OCI-LY7 (cell line): ENCODE measurements at regions of chr3 and their contacts with region 1.

Region 1: DNA sequence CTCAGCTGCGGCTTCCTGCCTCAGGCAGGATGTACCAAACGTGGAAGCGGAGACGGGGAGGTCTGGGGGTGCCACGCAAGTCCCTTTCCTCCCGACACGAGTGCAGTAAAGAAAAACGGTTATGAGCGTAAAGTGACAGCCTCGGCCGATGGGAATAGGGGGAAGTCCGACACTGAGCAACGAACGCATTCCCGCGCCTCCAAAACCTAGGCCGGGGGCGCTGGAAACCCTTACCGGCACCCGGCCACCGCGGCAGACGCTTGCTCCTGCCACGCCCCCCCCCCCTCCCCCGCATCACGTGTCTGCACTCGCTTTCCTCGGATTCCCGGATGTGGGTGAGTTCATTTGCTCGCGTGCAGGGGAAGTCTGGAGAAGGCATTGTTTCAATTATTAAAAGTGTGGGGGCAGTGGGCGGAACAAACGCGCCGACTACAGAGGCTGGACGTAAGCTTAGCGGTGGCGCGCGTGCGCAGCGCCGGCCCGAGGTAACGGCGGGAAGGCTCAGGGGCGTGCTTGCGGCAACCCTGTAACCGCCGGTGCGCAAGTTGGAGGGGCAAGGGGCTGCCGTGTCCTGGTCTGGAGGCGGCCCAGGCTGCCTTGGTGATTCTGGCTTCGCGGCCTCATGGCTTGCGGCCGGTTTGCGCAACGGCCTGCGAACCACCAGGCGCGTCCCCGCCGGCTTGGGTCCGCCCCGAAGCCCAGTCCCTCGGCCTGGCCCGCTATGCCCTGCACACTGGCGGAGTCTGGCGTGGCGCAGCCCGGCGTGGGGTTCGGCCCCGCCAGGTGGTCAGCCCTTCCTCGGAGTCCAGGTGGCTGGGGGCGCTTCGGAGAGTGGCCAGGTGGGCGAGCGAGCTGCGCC is at the starts of genes ANAPC13 and CEP63:
- DNase-seq: peak; percentile 99
- H3K4me3 ChIP-seq: peak within 1 kb of the TSS; percentile 81
- H3K27ac ChIP-seq: peak within 1 kb of the TSS; percentile 83
- H3K4me1 ChIP-seq: peaks cover 23% of the 10 kb centered on the region
- CTCF ChIP-seq: no peak
- total RNA-seq, gene ANAPC13: 29.8 and 57.8 TPM in 2 replicates
- total RNA-seq, gene CEP63: 21.1 and 45.7 TPM in 2 replicates

Region 2: DNA sequence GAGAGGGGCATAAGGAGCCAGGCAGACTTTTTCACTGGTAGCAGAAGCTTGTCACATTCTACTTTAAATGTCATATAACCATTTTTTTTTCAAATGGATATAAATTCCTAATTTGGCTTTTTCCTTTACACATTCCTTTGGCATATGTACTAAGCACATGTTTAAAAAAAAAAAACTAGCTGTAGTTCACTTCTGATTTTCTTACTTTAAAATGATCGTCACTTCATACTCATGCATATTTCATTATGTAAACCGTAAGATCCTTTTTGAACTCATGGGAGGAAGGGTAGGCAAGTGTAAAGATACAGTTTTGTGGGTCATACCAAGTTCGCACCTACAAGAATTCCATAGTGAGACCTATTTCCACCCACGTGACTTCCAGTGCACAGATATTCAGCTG is 1131.2 kb before region 1 on chr3:
- CTCF ChIA-PET with region 1: no interaction called
- POLR2A ChIA-PET with region 1: no interaction called
- intact Hi-C with region 1: no loop called
- DNase-seq: no peak
- H3K4me3 ChIP-seq: no peak overlapping the region
- H3K27ac ChIP-seq: no peak overlapping the region
- H3K4me1 ChIP-seq: no peaks in the 10 kb centered on the region
- CTCF ChIP-seq: no peak

Region 3: DNA sequence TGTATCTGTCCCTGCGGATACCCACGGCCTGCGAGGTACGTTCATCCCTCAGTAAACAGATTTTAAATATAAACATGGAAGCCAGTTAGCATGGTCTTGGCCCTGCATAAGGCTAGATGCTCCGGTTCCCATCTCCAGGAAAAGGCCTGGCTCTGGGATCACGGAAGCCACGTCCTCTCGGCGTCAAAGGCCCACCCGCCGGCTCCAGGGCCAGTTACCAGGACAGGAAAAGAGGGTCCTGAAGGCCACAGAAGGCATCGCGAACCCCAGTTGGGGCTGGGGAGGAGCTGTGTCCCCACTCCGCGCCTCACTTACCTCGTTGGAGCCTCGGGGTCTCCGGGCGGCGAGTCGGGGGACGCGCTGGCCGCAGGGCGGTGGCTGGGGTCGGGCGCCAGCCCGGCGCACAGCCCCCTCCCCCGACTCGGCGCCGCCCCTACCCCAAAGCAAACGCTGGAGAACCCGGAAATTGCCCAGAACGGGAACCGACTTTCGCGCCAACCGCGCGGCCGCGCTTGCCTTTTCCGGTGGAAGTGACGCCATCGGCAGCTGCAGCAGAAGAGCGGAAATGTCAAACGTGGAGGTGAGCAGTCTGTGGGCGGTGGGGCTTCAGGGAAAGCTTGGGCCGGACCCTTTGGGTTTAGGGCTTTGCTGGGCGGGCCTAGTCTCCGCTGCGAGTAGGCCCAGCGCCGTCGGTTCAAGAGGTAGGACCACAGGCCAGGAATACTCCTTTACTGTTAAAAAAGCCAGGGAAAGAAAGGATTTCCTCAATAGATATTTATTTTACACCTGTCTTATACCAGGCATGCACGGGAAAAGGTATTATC is 824.3 kb before region 1 on chr3 and contains the start of gene TOPBP1:
- CTCF ChIA-PET with region 1: no interaction called
- POLR2A ChIA-PET with region 1: no interaction called
- intact Hi-C with region 1: loop called (anchors 10 kb)
- DNase-seq: peak; percentile 92
- H3K4me3 ChIP-seq: peak within 1 kb of the TSS; percentile 99
- H3K27ac ChIP-seq: peak within 1 kb of the TSS; percentile 76
- H3K4me1 ChIP-seq: peaks cover 39% of the 10 kb centered on the region
- CTCF ChIP-seq: no peak
- total RNA-seq, gene TOPBP1: 139 and 167 TPM in 2 replicates

Region 4: GRCh38 chr3:133805527-133806475 is 680.1 kb before region 1 on chr3 and contains the start of gene SRPRB:
- CTCF ChIA-PET with region 1: no interaction called
- POLR2A ChIA-PET with region 1: interaction called, 3 read pairs
- intact Hi-C with region 1: loop called (anchors 5 kb)
- DNase-seq: peak; percentile 96
- H3K4me3 ChIP-seq: peak within 1 kb of the TSS; percentile 87
- H3K27ac ChIP-seq: peak within 1 kb of the TSS; percentile 28
- H3K4me1 ChIP-seq: peaks cover 23% of the 10 kb centered on the region
- CTCF ChIP-seq: no peak
- total RNA-seq, gene SRPRB: 36.0 and 39.4 TPM in 2 replicates

Region 5: GRCh38 chr3:134180761-134181160 is 305.2 kb before region 1 on chr3:
- CTCF ChIA-PET with region 1: no interaction called
- POLR2A ChIA-PET with region 1: no interaction called
- intact Hi-C with region 1: no loop called
- DNase-seq: no peak
- H3K4me3 ChIP-seq: no peak overlapping the region
- H3K27ac ChIP-seq: no peak overlapping the region
- H3K4me1 ChIP-seq: no peaks in the 10 kb centered on the region
- CTCF ChIP-seq: no peak

Region 6: GRCh38 chr3:134250717-134251220 is 235.2 kb before region 1 on chr3 and contains the start of gene RYK:
- CTCF ChIA-PET with region 1: no interaction called
- POLR2A ChIA-PET with region 1: no interaction called
- intact Hi-C with region 1: loop called (anchors 2 kb)
- DNase-seq: peak; percentile 86
- H3K4me3 ChIP-seq: peak within 1 kb of the TSS; percentile 88
- H3K27ac ChIP-seq: peak within 1 kb of the TSS; percentile 29
- H3K4me1 ChIP-seq: peaks cover 10% of the 10 kb centered on the region
- CTCF ChIP-seq: no peak
- total RNA-seq, gene RYK: 24.8 and 25.0 TPM in 2 replicates

Region 7: DNA sequence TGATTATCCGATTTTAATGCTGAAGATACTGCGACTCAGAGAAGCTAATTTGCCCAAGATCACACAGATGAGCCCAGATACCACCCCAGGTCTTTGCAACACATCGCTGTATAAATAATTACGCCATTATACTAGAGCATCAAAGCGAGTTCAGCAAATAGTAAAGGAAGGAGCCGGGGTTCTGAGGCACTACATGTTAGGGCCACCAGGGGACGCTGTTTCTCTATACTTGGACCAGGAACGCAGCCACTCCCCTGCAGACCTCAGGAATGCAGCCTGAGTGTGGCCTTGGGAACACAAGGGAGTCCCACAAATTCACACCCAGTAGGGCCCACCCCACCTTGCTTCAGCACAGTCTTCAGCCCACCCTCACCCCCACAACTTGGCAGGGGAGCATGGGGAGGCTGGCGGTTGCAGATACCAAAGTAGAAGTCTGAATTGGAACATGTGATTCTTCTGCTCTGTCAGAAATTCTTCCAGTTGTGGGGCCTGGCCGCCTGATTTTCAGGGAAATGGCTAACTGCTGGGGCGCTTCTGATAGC is 177.5 kb before region 1 on chr3:
- CTCF ChIA-PET with region 1: no interaction called
- POLR2A ChIA-PET with region 1: interaction called, 3 read pairs
- intact Hi-C with region 1: loop called (anchors 1 kb)
- DNase-seq: peak; percentile 72
- H3K4me3 ChIP-seq: no peak overlapping the region
- H3K27ac ChIP-seq: no peak overlapping the region
- H3K4me1 ChIP-seq: no peaks in the 10 kb centered on the region
- CTCF ChIP-seq: peak; percentile 99

Region 8: GRCh38 chr3:134473868-134474546 is 11.9 kb before region 1 on chr3:
- CTCF ChIA-PET with region 1: no interaction called
- POLR2A ChIA-PET with region 1: interaction called, 11 read pairs
- intact Hi-C with region 1: no loop called
- DNase-seq: peak; percentile 80
- H3K4me3 ChIP-seq: no peak overlapping the region
- H3K27ac ChIP-seq: no peak overlapping the region
- H3K4me1 ChIP-seq: no peaks in the 10 kb centered on the region
- CTCF ChIP-seq: peak; percentile 94